GM12878 (cell line): ENCODE measurements at regions of chr3 and their contacts with region 1.

Region 1: DNA sequence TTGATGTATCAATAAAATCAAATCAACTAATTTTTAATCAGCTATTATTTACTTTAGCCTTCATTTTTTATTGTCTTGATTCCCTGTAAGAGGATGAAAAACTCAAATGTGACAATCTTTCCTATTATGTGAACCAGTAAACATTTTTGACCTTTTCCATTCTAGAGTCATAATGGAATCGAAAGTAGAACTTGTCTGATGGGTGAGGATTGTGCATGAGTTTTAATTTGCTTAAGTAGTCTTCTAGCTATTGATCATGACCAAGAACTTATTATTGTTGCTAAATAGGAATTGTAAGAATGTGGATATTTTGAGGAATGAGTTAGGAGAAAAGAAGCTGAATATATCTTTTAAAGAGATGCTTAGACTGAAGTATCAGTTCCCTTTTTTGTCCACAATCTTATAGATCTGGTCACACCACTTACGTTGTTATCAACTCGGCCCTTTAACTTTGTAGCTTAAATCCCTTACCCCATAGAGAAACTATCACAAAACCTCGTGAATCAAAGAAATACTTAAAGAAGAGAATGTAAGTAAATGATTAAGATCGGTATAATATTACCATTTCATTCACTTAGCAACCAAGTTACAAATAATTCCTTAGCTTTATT is 147.3 kb downstream of the TP63 start:
- DNase-seq: no peak
- ATAC-seq: peak; percentile 86
- H3K4me3 ChIP-seq: no peak overlapping the region
- H3K27ac ChIP-seq: no peak overlapping the region
- H3K4me1 ChIP-seq: peaks cover 5% of the 10 kb centered on the region; the same call in 1 of the 2 replicates
- H3K27me3 ChIP-seq: no peaks in the 10 kb centered on the region
- CTCF ChIP-seq: no peak
- EP300 ChIP-seq: peak in 1 of 2 experiments; percentile 30; a peak in 1 of 4 replicates
- POLR2A ChIP-seq: no peak
- RAD21 ChIP-seq: no peak

Region 2: DNA sequence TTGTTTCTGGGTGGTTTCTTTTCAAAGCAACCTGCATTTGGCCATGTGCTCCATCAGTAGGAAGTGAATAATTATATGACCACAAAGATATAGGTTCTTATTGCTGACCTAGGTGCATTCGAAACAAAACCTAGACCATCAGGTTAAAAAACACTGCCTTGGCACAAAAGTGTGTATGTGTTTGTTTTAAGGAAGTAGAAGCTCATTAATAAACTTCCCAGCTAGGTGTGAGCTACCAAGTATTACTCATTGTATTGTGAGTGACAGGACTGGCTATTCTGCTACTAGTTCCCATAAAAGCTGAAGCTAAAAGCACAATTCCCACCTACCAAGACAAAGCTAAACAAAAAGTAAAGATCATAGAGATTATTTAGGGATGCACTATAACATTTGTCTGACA is 20.9 kb after region 1 on chr3:
- CTCF ChIA-PET with region 1: interaction called, 4 read pairs
- POLR2A ChIA-PET with region 1: no interaction called
- RAD21 ChIA-PET with region 1: interaction called, 10 read pairs
- SMC1A ChIA-PET with region 1: interaction called, 4 read pairs
- in situ Hi-C with region 1: no loop called
- intact Hi-C with region 1: no loop called
- DNase-seq: peak; percentile 42
- ATAC-seq: peak; percentile 50
- H3K4me3 ChIP-seq: no peak overlapping the region
- H3K27ac ChIP-seq: no peak overlapping the region
- H3K4me1 ChIP-seq: 0 out of 2 replicates have a peak, but pooled peaks cover 4% of the 10 kb centered on the region
- H3K27me3 ChIP-seq: no peaks in the 10 kb centered on the region
- CTCF ChIP-seq: no peak
- EP300 ChIP-seq: no peak
- POLR2A ChIP-seq: no peak
- RAD21 ChIP-seq: no peak

Region 3: GRCh38 chr3:189961525-189962161 is 183.2 kb after region 1 on chr3:
- CTCF ChIA-PET with region 1: no interaction called
- POLR2A ChIA-PET with region 1: no interaction called
- RAD21 ChIA-PET with region 1: no interaction called
- SMC1A ChIA-PET with region 1: no interaction called
- in situ Hi-C with region 1: no loop called
- intact Hi-C with region 1: no loop called
- DNase-seq: peak; percentile 19
- ATAC-seq: peak; percentile 82
- H3K4me3 ChIP-seq: no peak overlapping the region
- H3K27ac ChIP-seq: no peak overlapping the region
- H3K4me1 ChIP-seq: no peaks in the 10 kb centered on the region
- H3K27me3 ChIP-seq: no peaks in the 10 kb centered on the region
- CTCF ChIP-seq: peak; percentile 86 to 92 (median 92); a peak in 5 of 6 replicates
- EP300 ChIP-seq: no peak
- POLR2A ChIP-seq: no peak
- RAD21 ChIP-seq: peak; percentile 94